ENCODE measurements at regions of chr16 and their contacts with region 1.

Region 1: GRCh38 chr16:30747799-30748634 is at the start of gene PHKG2:
- DNase-seq: peak; percentile 99
- H3K4me3 Mint-ChIP-seq: peak within 1 kb of the TSS; percentile 93
- H3K27ac Mint-ChIP-seq: peak within 1 kb of the TSS; percentile 84
- H3K4me1 Mint-ChIP-seq: peaks cover 33% of the 10 kb centered on the region
- H3K27me3 Mint-ChIP-seq: no peaks in the 10 kb centered on the region
- total RNA-seq, gene PHKG2: 34.5 to 38.6 TPM

Region 2: DNA sequence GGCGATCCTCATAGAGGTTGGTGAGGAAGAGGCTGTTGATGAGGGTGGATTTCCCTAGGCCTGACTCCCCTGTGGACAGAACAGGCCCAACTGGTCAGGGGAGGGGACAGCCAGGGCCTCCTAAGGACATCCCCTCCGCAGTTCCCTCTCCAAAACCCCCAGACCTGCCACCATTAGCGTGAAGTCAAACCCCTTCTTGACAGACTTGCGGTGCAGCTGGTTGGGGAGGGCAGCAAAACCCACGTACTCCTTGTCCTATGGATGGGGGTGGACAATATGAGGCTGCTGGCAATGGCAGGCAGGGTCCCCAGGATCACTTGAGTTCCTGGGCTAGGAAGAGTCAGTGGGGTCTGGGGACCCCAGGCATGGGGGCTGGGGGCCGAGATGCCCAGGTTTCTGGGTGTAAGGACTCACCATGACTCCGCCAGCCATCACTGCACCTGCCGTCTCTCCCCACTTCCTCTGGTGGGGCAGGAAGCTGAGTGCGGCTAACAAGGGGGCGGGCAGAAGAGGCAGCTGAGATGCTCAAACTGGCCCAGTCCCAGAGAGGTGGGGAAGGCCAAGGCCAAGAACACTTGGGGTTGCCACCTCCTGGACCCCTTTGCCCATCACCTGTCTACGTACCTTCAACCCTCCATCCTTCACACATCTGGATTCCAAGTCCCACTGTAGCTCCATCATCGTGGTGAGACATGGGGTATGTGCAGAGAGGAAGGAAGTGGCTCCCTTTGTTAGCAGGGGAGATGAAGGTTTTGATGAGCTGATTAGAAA is 365.7 kb before region 1 on chr16 and contains the start of gene SEPTIN1:
- CTCF ChIA-PET with region 1: no interaction called
- POLR2A ChIA-PET with region 1: no interaction called
- DNase-seq: peak; percentile 89
- H3K4me3 Mint-ChIP-seq: peak within 1 kb of the TSS; percentile 82
- H3K27ac Mint-ChIP-seq: peak within 1 kb of the TSS; percentile 99
- H3K4me1 Mint-ChIP-seq: peaks cover 54% of the 10 kb centered on the region
- H3K27me3 Mint-ChIP-seq: no peaks in the 10 kb centered on the region
- total RNA-seq, gene SEPTIN1: 343 to 354 TPM

Region 3: GRCh38 chr16:30619202-30619601 is 128.8 kb before region 1 on chr16:
- CTCF ChIA-PET with region 1: no interaction called
- POLR2A ChIA-PET with region 1: no interaction called
- DNase-seq: no peak
- H3K4me3 Mint-ChIP-seq: no peak overlapping the region
- H3K27ac Mint-ChIP-seq: no peak overlapping the region
- H3K4me1 Mint-ChIP-seq: peaks cover 4% of the 10 kb centered on the region
- H3K27me3 Mint-ChIP-seq: peaks cover 37% of the 10 kb centered on the region

Region 4: GRCh38 chr16:30731411-30731810 is 16.6 kb before region 1 on chr16:
- CTCF ChIA-PET with region 1: no interaction called
- POLR2A ChIA-PET with region 1: interaction called, 16 read pairs
- DNase-seq: no peak
- H3K4me3 Mint-ChIP-seq: no peak overlapping the region
- H3K27ac Mint-ChIP-seq: no peak overlapping the region
- H3K4me1 Mint-ChIP-seq: peaks cover 14% of the 10 kb centered on the region
- H3K27me3 Mint-ChIP-seq: no peaks in the 10 kb centered on the region

Region 5: GRCh38 chr16:30736996-30737793 is 10.8 kb before region 1 on chr16:
- CTCF ChIA-PET with region 1: no interaction called
- POLR2A ChIA-PET with region 1: interaction called, 16 read pairs
- DNase-seq: no peak
- H3K4me3 Mint-ChIP-seq: no peak overlapping the region
- H3K27ac Mint-ChIP-seq: no peak overlapping the region
- H3K4me1 Mint-ChIP-seq: peaks cover 10% of the 10 kb centered on the region
- H3K27me3 Mint-ChIP-seq: no peaks in the 10 kb centered on the region

Region 6: GRCh38 chr16:30761928-30762810 is 14.2 kb after region 1 on chr16 and contains the starts of genes CFAP119 and RNF40:
- CTCF ChIA-PET with region 1: interaction called, 3 read pairs
- POLR2A ChIA-PET with region 1: interaction called, 28 read pairs
- DNase-seq: peak; percentile 94
- H3K4me3 Mint-ChIP-seq: peak within 1 kb of the TSS; percentile 97
- H3K27ac Mint-ChIP-seq: peak within 1 kb of the TSS; percentile 88
- H3K4me1 Mint-ChIP-seq: peaks cover 29% of the 10 kb centered on the region
- H3K27me3 Mint-ChIP-seq: no peaks in the 10 kb centered on the region
- total RNA-seq, gene CFAP119: 3.1 to 4.1 TPM
- total RNA-seq, gene RNF40: 96.1 to 96.2 TPM

Region 7: DNA sequence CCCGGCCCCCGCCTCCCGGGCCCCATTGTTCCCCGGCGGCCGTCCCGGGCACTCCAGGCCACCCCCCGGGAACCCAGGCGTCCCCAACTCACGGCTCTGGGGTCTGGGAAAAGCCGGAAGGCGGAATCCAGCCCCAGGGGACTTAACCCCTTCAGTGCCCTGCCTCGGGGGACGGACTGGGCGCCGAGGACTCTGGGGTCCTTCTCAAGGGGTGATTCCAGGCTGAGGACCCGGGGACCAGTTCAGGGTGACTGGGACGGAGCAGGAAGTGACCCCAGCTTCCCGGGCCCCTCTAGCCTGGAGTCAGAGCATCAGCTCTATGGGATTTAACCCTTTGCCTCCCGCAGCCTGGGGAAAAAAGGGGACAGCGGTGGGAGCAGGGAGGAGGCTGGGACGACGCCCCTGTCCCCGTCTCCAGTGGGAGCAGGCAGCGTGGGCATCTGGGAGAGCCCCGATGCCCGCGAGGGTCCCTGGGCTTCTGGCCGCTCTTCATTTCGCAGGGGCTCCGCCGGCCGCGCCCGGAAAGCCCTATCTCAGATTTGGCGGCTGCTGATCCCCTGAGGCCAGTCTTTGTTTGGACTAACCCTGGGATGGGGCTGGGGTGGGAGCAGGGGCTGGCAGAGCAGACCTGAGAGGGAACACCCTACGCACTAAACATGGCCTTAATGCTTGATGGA is 39.1 kb after region 1 on chr16 and contains the start of gene ZNF629:
- CTCF ChIA-PET with region 1: no interaction called
- POLR2A ChIA-PET with region 1: no interaction called
- DNase-seq: no peak
- H3K4me3 Mint-ChIP-seq: peak within 1 kb of the TSS; percentile 69
- H3K27ac Mint-ChIP-seq: no peak within 1 kb of the TSS
- H3K4me1 Mint-ChIP-seq: peaks cover 10% of the 10 kb centered on the region
- H3K27me3 Mint-ChIP-seq: peaks cover 29% of the 10 kb centered on the region
- total RNA-seq, gene ZNF629: 1.0 to 1.2 TPM

Region 8: GRCh38 chr16:30813821-30814189 is 65.8 kb after region 1 on chr16:
- CTCF ChIA-PET with region 1: interaction called, 14 read pairs
- POLR2A ChIA-PET with region 1: interaction called, 8 read pairs
- DNase-seq: no peak
- H3K4me3 Mint-ChIP-seq: peak overlapping the region; percentile 74
- H3K27ac Mint-ChIP-seq: peak overlapping the region; percentile 78
- H3K4me1 Mint-ChIP-seq: peaks cover 13% of the 10 kb centered on the region
- H3K27me3 Mint-ChIP-seq: no peaks in the 10 kb centered on the region

Measured in activated CD4-positive, alpha-beta memory T cell treated with anti-CD3 and anti-CD28 coated beads, Interleukin-2, amount 10 ng/mL, durations not matched to agents 7 days and 5 days (primary cell).